ENCODE measurements at regions of chr2 and their contacts with region 1.

Region 1: DNA sequence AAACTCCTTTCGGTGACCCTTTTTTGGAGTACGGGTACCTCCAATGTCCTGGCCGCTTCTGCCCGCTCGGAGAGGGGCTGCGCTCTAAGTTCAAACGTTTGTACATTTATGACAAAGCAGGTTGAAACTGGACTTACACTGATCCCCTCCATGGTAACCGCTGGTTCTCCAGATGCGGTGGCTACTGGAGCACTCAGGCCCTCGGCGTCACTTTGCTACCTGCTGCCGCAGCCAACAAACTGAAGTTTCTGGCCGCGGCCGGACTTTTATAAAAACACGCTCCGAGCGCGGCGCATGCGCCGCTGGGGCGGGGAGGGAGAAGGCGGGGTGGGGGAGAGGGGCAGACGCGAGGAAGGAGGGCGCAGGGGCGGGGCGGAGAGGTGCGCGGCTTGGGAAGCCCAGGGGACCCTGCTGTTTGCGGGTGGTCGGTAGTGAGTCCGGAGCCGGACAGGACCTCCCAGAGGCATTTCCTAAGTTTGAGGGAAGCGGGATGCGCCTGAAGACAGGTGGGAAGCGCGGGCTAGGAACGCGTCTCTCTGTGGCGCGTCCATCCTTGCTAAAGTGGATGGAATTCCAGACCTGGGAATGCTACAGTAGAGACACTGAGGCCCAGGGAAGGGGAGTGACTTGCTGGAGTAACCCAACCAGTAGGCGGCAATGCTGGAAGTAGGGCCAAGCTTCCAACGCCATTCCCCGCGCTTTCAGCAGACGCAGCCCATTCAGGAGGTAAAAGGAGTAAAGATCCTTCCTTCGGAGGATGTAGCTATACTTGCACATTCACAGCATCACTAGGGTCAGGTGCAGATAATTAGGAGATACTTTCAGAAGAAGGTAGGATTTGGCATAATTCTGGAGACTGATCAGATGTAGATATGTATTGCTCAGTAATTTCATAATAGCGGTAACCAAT is at the start of gene CXCR4:
- DNase-seq: peak; percentile 90
- ATAC-seq: peak; percentile 34
- H3K4me3 Mint-ChIP-seq: peak within 1 kb of the TSS; percentile 94
- H3K27ac Mint-ChIP-seq: peak within 1 kb of the TSS; percentile 93
- H3K4me1 Mint-ChIP-seq: peaks cover 60% of the 10 kb centered on the region
- H3K27me3 Mint-ChIP-seq: peaks cover 2% of the 10 kb centered on the region
- total RNA-seq, gene CXCR4: 75.4 to 89.3 TPM

Region 2: DNA sequence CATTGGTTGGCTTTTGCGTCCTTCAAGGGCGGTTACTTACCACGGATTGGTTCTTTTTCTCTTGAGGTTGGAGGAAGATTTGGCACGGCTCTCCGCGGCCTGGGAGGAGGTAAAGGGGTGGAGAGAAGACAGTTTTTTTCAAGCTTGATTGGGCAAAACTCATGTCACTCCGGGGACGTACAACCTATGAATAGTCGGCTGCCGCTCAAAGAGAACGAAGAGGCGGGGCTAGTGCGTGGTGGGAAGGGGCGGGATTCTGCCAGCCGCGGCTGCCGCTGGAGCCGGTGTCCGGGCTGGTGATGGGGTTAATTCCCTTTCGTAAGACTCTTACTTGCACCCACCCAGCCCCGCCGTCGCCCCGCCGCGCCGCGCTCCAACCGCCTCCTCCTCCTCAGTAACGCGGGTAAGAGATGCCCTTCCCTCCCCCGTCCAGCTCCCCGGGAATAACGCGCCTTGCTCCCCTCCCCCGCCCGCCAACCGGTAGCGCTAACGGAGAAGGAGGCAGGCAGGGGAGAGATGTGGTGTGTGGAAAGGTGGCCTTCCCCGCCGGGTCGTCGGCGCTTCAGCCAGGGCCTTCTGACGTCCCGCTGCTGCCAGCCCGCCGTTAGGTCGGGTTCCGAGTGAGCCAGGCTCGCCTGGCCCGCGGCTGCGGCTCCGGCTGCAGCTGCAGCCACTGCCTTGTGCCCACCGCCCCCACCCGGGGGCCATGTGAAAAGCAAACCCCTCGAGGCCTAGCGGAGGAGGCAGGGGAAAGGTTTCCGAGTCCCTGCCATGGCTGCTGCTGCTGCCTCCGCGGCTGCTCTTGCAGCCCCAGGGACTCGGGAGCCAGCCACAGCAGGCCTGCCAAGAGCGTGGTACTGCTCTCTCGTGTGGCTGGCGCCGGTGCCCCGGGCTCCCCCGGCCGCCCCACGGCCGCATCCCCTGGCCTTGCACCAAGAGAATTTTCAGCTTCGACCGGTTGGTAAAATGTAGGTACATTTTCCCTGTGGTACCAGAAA is 586.6 kb before region 1 on chr2 and contains the start of gene R3HDM1:
- CTCF ChIA-PET with region 1: no interaction called
- POLR2A ChIA-PET with region 1: no interaction called
- intact Hi-C with region 1: loop called in 1 of 2 experiments (anchors 5 kb)
- DNase-seq: peak; percentile 96
- ATAC-seq: peak; percentile 88
- H3K4me3 Mint-ChIP-seq: no peak within 1 kb of the TSS
- H3K27ac Mint-ChIP-seq: peak within 1 kb of the TSS; percentile 84
- H3K4me1 Mint-ChIP-seq: peaks cover 32% of the 10 kb centered on the region
- H3K27me3 Mint-ChIP-seq: no peaks in the 10 kb centered on the region
- total RNA-seq, gene R3HDM1: 62.6 to 100.0 TPM

Region 3: GRCh38 chr2:135638825-135639224 is 479.3 kb before region 1 on chr2:
- CTCF ChIA-PET with region 1: no interaction called
- POLR2A ChIA-PET with region 1: no interaction called
- intact Hi-C with region 1: no loop called
- DNase-seq: no peak
- ATAC-seq: no peak
- H3K4me3 Mint-ChIP-seq: no peak overlapping the region
- H3K27ac Mint-ChIP-seq: no peak overlapping the region
- H3K4me1 Mint-ChIP-seq: peaks cover 11% of the 10 kb centered on the region
- H3K27me3 Mint-ChIP-seq: no peaks in the 10 kb centered on the region

Region 4: DNA sequence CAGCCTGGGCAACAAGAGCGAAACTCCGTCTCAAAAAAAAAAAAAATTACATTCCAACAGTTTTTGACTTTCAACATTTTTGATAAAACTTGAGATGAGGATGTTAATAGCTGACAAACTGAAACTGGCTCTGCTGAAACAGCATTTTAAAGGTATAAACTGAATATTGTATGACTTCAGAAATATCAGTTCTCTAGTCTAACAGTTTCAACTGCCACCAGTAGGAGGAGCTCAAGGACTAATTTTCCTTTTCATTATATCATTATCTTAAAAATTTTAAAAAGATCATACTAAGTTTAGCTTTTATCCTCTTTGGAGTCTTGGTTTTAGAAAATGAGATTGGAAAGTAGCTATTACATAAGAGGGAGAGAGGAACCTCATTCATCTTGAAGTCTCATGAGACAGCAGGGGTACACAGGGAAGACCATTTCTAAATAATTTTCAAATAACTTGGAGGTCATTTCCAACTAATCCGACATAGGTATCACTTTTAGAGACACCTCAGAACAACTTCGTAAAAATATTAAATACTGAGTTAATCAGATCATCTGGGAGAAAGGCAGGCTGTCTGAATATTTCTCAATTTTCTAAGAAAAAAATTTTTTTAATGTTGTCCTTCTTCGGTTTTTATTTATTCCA is 204.3 kb before region 1 on chr2:
- CTCF ChIA-PET with region 1: interaction called, 3 read pairs
- POLR2A ChIA-PET with region 1: no interaction called
- intact Hi-C with region 1: loop called (anchors 1 to 2 kb)
- DNase-seq: peak; percentile 53
- ATAC-seq: peak; percentile 58
- H3K4me3 Mint-ChIP-seq: no peak overlapping the region
- H3K27ac Mint-ChIP-seq: no peak overlapping the region
- H3K4me1 Mint-ChIP-seq: peaks cover 7% of the 10 kb centered on the region
- H3K27me3 Mint-ChIP-seq: no peaks in the 10 kb centered on the region

Region 5: GRCh38 chr2:136059036-136059472 is 59.1 kb before region 1 on chr2:
- CTCF ChIA-PET with region 1: no interaction called
- POLR2A ChIA-PET with region 1: no interaction called
- intact Hi-C with region 1: loop called (anchors 1 to 2 kb)
- DNase-seq: no peak
- ATAC-seq: no peak
- H3K4me3 Mint-ChIP-seq: no peak overlapping the region
- H3K27ac Mint-ChIP-seq: no peak overlapping the region
- H3K4me1 Mint-ChIP-seq: peaks cover 49% of the 10 kb centered on the region
- H3K27me3 Mint-ChIP-seq: no peaks in the 10 kb centered on the region

Region 6: GRCh38 chr2:136075466-136075865 is 42.7 kb before region 1 on chr2:
- CTCF ChIA-PET with region 1: no interaction called
- POLR2A ChIA-PET with region 1: no interaction called
- intact Hi-C with region 1: no loop called
- DNase-seq: no peak
- ATAC-seq: no peak
- H3K4me3 Mint-ChIP-seq: no peak overlapping the region
- H3K27ac Mint-ChIP-seq: no peak overlapping the region
- H3K4me1 Mint-ChIP-seq: peaks cover 3% of the 10 kb centered on the region
- H3K27me3 Mint-ChIP-seq: no peaks in the 10 kb centered on the region

Region 7: DNA sequence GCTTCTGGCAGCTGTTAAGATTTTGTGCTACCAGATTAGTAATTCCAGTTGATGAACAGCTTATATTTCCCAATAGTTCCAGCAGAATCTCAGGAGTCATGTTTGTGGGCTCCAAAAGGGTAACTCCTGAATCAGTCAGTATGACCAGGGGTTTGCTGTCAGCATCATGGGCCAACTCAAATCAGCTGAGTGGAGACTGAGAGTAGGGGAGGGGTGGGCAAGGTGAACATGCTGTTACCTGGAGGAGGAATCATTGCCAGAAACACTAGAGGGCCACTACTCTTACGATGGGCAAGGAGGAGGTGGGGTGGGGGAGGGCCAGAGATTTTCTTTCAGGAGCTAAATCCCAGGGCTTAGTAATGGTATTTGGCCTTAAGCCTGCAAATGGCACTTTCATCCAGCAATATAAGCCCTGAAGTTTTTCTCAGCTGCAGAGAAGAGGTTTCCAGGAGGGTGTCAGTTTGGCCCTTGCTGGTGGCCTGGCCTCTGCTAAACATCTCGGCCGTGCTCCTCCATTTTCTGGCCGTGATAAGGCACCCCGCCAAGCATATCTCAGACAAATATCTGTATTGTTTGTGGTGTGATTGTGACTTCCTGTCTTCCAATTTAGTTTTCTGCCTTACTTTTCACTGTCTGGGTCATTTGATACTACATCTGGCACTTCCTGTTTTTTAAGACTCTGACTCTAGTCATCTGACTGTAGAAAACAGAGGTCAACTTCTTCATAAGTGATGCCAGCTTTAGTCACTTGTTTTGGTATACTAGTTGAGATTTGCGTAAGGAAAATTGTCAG is 120.3 kb after region 1 on chr2:
- CTCF ChIA-PET with region 1: no interaction called
- POLR2A ChIA-PET with region 1: no interaction called
- intact Hi-C with region 1: loop called in 1 of 2 experiments (anchors 5 kb)
- DNase-seq: peak; percentile 44
- ATAC-seq: peak; percentile 82
- H3K4me3 Mint-ChIP-seq: peak overlapping the region; percentile 15
- H3K27ac Mint-ChIP-seq: peak overlapping the region; percentile 93
- H3K4me1 Mint-ChIP-seq: peaks cover 43% of the 10 kb centered on the region
- H3K27me3 Mint-ChIP-seq: no peaks in the 10 kb centered on the region

Region 8: DNA sequence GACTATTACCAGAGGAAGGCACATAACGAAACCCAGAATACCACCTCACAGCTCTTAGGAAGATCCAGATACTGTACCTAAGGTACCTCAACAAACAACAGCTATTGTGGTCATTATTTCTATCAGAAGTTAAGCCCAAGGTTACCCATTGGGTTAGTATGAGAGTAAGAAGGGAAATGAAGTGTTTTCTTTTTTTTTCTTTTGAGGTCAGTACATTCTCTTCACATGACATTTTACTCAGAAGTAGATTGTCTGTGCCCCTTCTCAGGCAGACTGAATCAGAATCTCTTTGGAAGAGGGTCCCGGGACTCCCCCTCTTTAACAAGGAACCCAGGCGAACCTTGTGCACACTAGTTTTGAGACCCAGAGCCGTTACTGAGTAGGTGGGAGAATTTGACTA is 233.5 kb after region 1 on chr2:
- CTCF ChIA-PET with region 1: no interaction called
- POLR2A ChIA-PET with region 1: no interaction called
- intact Hi-C with region 1: no loop called
- DNase-seq: no peak
- ATAC-seq: peak; percentile 60
- H3K4me3 Mint-ChIP-seq: no peak overlapping the region
- H3K27ac Mint-ChIP-seq: peak overlapping the region; percentile 4
- H3K4me1 Mint-ChIP-seq: peaks cover 18% of the 10 kb centered on the region
- H3K27me3 Mint-ChIP-seq: peaks cover 2% of the 10 kb centered on the region

Region 9: DNA sequence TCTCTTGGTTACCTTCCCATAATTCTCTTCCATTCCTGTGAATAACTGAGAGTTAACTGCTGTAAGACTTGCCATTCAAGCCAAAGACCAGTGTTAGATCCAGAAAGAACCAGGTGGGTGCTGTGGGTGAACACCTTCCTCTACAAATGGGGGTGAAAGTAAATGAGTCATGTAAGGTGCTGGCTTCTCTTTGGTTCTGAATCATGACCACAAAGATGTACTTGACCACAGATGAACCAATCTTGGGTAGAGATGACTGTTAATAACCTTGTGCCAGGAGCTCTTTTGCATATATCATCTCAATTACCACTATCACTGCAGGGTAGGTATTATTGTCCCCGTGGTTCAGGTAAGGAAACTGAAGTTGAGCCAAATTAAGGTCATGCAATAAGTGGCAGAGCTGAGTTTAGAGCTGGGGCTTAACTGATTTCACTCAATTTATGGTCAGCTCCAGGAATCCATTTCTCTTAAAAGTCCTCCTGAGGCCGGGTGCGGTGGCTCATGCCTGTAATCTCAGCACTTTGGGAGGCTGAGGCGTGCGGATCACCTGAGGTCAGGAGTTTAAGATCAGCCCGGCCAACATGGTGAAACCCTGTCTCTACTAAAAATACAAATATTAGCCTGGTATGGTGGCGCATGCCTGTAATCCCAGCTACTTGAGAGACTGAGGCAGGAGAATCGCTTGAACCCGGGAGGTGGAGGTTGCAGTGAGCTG is 244.7 kb after region 1 on chr2:
- CTCF ChIA-PET with region 1: no interaction called
- POLR2A ChIA-PET with region 1: no interaction called
- intact Hi-C with region 1: loop called in 1 of 2 experiments (anchors 5 kb)
- DNase-seq: peak; percentile 65
- ATAC-seq: peak; percentile 82
- H3K4me3 Mint-ChIP-seq: no peak overlapping the region
- H3K27ac Mint-ChIP-seq: peak overlapping the region; percentile 63
- H3K4me1 Mint-ChIP-seq: peaks cover 54% of the 10 kb centered on the region
- H3K27me3 Mint-ChIP-seq: peaks cover 12% of the 10 kb centered on the region

Measured in activated CD4-positive, alpha-beta T cell treated with anti-CD3 and anti-CD28 coated beads for 36 hours (primary cell).